Mammary epithelial cell (primary cell): ENCODE measurements at regions of chr14 and their contacts with region 1.

Region 1: DNA sequence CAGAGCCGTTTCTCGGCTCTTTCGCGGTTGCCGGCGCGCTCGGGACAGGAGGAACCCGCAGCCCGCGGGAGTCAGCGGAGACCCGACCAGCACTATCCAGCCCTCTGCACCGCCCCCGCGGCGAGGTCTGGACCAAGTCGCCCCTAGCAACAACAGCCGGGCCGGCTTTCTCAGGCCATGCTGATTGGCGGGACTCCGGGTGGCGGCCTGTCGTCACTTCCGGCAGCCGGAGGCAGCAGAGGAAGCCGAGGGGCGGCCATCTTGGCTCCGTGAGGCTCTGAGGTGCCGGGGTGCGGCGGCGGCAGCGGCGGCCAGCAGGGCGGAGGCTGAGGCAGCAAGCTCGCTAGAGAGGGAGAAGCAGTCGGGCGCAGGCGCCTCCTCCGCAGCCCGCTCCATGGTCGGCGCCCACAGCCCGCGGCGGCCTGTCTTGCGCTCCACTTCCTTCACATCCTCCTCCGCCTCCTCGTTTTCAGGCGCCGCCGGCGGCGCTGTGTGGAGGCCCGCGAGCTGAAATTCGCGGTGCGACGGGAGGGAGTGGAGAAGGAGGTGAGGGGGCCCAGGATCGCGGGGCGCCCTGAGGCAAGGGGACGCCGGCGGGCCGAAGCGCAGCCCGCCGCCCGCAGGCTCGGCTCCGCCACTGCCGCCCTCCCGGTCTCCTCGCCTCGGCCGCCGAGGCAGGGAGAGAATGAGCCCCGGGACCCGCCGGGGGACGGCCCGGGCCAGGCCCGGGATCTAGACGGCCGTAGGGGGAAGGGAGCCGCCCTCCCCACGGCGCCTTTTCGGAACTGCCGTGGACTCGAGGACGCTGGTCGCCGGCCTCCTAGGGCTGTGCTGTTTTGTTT is at the start of gene MARK3:
- DNase-seq: peak; percentile 97
- H3K4me3 ChIP-seq: peak within 1 kb of the TSS; percentile 71 to 99 (median 93)
- H3K27ac ChIP-seq: peak within 1 kb of the TSS; percentile 75
- H3K4me1 ChIP-seq: peaks cover 24% of the 10 kb centered on the region
- H3K27me3 ChIP-seq: no peaks in the 10 kb centered on the region
- CTCF ChIP-seq: peak in 1 of 2 donors; percentile 2
- total RNA-seq, gene MARK3: 85.7 to 175 TPM

Region 2: DNA sequence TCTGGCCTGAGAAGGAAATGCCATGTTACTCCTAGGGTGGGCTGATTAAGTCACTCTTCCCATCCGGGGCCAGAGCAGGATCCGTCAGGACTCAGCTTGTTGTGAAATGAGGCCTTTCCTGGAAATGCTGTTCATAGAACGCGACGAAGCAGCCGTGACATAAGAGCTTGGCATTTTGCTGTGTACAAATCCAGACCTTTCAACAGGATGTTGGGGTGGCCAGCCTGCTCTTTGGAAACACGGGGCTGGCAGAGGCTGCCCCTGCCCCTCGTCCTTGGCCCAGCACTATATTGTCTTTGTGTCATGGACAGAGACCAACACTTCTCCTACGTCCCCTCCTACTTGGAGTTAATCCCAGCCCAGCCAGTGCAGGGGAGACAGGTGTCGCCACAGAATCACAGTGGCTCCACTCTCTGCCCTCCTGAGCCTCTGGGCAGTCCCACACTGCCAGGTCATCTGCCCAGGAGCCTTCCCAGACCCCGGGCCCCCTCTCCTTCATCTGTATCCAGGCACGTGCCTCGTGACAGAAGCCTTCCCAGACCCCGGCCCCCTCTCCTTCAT is 69.9 kb before region 1 on chr14:
- CTCF ChIA-PET with region 1: no interaction called
- dilution Hi-C with region 1: no loop called
- in situ Hi-C with region 1: no loop called
- intact Hi-C with region 1: no loop called
- DNase-seq: peak; percentile 28
- H3K4me3 ChIP-seq: no peak overlapping the region
- H3K27ac ChIP-seq: no peak overlapping the region
- H3K4me1 ChIP-seq: no peaks in the 10 kb centered on the region
- H3K27me3 ChIP-seq: no peaks in the 10 kb centered on the region
- CTCF ChIP-seq: no peak

Region 3: DNA sequence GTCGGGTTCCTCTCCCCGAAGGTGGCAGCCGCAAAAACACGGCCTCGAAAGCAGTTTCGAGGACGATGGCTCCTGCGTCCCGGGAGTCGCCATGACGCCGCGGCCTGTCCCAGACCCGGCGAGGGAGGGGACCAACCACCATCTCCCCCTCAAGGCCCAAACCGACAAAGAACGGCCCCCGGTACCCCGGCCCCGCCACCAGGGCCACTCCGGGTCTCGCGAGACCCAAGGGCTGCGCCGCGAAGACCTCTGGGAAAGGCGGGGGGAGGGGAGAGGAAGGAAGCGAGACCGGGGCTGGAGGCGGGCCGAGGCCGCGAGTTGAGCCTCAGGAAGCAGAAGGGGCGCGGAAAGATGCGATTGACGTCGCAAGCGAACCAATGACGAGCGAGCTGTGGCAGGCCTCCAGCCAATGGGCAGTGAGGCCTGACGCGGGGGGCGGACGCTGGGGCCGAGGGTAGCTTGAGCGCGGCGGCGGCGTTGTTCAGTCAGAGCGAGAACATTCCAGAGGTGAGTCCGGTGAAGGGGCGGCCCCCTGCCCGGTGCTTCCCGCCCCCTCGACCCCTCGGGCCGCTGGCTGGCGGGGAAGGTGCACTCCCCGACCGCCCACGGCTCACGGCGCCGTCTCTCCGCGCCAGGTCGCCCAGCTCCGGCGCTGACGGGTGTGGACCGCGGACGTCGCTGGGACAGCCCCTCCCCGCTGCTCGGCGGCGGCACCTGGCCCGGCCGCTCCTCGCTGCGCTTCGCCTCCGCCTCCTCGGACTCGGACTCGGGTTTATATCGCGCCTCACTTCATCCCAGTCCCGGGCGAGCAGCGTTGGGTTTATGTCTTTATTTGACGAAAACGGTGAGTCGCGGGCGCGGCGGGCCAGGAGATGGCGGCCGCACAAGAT is 51.4 kb before region 1 on chr14 and contains the start of gene EIF5:
- CTCF ChIA-PET with region 1: no interaction called
- dilution Hi-C with region 1: no loop called
- in situ Hi-C with region 1: no loop called
- intact Hi-C with region 1: loop called (anchors 1 kb)
- DNase-seq: peak; percentile 98
- H3K4me3 ChIP-seq: peak within 1 kb of the TSS; percentile 83 to 95 (median 87)
- H3K27ac ChIP-seq: peak within 1 kb of the TSS; percentile 94
- H3K4me1 ChIP-seq: peaks cover 19% of the 10 kb centered on the region
- H3K27me3 ChIP-seq: no peaks in the 10 kb centered on the region
- CTCF ChIP-seq: peak in 1 of 2 donors; percentile 35
- total RNA-seq, gene EIF5: 142 to 333 TPM

Region 4: DNA sequence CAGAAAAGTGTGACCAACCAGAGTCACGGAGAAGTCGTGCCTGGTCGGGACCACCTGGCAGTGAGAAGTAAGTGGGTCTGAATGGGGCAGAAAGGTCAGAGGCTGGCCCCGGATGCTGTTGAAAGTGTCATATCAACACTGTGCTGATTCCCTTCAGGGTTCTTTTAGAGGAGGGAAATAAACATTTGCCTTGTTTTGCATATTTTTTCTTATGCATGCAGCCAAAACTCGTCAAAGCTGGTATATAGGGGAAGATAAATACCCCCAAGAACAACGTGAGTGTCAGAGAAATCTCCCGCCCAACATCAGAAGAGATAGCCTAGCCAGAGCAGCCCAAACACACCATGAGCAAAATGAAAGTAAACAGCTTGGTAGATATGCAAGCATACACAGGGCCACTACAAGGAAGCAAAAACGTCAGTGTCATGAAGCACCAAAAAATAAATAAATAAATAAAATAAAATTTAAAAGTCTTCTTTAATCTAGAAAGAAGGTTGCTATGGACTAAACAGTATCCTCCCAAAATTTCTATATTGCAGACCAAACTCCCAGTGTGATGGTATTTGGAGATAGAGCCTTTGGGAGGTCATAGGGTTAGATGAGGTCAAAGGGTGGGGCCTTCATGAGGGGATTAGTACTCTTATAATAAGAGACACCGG is 29.2 kb before region 1 on chr14:
- CTCF ChIA-PET with region 1: no interaction called
- dilution Hi-C with region 1: loop called (anchors 5 kb)
- in situ Hi-C with region 1: no loop called
- intact Hi-C with region 1: loop called (anchors 2 kb)
- DNase-seq: no peak
- H3K4me3 ChIP-seq: no peak overlapping the region
- H3K27ac ChIP-seq: no peak overlapping the region
- H3K4me1 ChIP-seq: peaks cover 31% of the 10 kb centered on the region
- H3K27me3 ChIP-seq: no peaks in the 10 kb centered on the region
- CTCF ChIP-seq: no peak

Region 5: DNA sequence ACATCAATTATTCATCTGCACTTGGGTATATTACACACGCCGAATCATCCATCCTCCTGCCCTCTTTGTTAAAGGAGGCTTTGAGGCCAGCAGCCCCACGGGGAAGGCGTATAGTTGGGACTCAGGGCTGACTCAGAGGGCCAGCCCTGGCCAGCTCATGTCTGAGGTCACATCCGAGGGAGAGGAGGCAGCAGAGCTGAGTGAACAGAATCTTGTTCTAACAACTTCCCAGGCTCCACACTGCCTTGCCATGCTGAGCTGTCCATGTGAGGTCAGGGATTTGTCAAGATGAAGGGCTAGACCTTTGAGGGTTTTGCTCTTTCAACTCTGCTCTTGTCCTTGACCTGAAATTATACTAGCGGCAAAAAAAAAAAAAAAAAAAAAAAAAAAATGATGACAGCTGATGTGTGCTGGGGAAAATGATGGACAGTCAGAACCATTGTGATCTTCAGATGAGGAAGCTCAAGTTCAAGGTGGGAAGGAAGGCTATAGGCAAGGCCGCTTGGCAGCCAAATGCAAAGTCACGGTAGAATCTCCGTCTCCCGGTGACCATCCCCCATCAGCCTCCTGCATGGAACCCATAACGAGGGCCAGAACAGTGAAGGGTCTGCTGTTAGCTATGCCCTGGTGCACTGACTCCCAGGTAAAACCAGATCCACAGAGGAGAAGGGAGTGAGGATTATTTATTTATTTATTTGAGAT is 12.6 kb before region 1 on chr14:
- CTCF ChIA-PET with region 1: no interaction called
- dilution Hi-C with region 1: no loop called
- in situ Hi-C with region 1: no loop called
- intact Hi-C with region 1: loop called (anchors 1 kb)
- DNase-seq: peak; percentile 99
- H3K4me3 ChIP-seq: no peak overlapping the region
- H3K27ac ChIP-seq: peak overlapping the region; percentile 72
- H3K4me1 ChIP-seq: peaks cover 14% of the 10 kb centered on the region
- H3K27me3 ChIP-seq: no peaks in the 10 kb centered on the region
- CTCF ChIP-seq: no peak